ENCODE measurements at regions of chr1 and their contacts with region 1.

Region 1: DNA sequence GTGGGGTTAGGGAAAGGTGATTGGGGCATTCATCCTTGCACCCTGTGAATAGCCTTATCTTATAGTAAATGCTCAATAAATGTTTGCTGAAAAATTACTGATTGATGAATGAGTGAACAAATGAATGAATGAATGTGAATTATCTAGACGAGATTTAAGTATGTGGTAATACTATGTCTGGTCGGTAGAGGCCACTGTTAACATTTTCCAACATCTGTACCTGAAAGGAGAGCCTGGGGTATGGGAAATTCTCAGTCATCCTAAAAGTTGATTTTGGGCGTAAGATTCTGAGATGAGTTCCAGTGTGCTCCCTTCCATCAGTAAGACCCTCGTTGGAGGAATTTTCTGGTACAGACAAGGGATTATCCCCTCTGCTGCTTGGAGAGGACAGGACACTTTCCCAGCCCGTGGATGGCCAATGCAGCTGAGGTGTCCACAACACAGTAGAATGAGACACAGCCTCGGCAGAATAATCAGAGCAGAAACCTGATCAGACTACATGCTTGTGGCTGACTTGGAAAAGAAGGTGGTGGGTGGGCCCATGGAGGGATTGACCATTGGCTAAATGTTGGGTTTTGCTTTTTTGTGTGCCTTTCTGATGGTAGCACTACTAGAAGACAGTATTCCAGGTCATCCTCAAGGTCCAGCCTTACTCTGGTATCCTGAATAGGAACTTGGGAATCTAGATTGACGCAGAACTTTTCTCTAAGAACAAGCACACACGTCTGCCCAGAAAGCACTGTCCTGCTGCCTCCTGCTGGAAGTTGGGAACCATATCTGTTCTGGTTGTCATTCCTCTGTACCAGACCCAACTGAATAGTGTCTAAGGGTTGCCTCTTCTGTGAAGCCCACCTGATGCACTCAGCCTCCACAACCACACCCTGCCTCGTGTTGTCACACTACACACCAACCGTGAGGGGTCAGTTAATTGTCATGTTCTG is 262.0 kb downstream of the TNR start:
- DNase-seq: no peak
- ATAC-seq: peak in 3 of 4 donors; percentile 34 to 55 (median 36)
- H3K4me3 ChIP-seq: no peak overlapping the region
- H3K27ac ChIP-seq: no peak overlapping the region
- H3K4me1 ChIP-seq: no peaks in the 10 kb centered on the region
- H3K27me3 ChIP-seq: peaks cover 0 to 9% (median 0%) of the 10 kb centered on the region in 9 donors
- CTCF ChIP-seq: peak; percentile 37 to 72 (median 64)
- POLR2A ChIP-seq: no peak

Region 2: GRCh38 chr1:175725684-175726083 is 244.3 kb after region 1 on chr1:
- intact Hi-C with region 1: loop called in 1 of 10 experiments (anchors 10 kb)
- DNase-seq: peak in 1 of 5 donors; percentile 26
- ATAC-seq: no peak
- H3K4me3 ChIP-seq: no peak overlapping the region
- H3K27ac ChIP-seq: no peak overlapping the region
- H3K4me1 ChIP-seq: no peaks in the 10 kb centered on the region
- H3K27me3 ChIP-seq: peaks cover 0 to 15% (median 0%) of the 10 kb centered on the region in 9 donors
- CTCF ChIP-seq: no peak
- POLR2A ChIP-seq: no peak

Region 3: GRCh38 chr1:175742790-175743459 is 261.5 kb after region 1 on chr1:
- intact Hi-C with region 1: loop called in 7 of 10 experiments (anchors 5 to 10 kb)
- DNase-seq: no peak
- ATAC-seq: peak; percentile 37 to 79 (median 51)
- H3K4me3 ChIP-seq: no peak overlapping the region
- H3K27ac ChIP-seq: no peak overlapping the region
- H3K4me1 ChIP-seq: peaks cover 0 to 5% (median 0%) of the 10 kb centered on the region in 12 donors
- H3K27me3 ChIP-seq: peaks cover 0 to 22% (median 4%) of the 10 kb centered on the region in 9 donors
- CTCF ChIP-seq: no peak
- POLR2A ChIP-seq: no peak

Region 4: GRCh38 chr1:175887981-175888433 is 406.6 kb after region 1 on chr1:
- intact Hi-C with region 1: loop called (anchors 2 to 10 kb)
- DNase-seq: peak; percentile 45 to 68 (median 56)
- ATAC-seq: peak; percentile 82 to 97 (median 92)
- H3K4me3 ChIP-seq: no peak overlapping the region
- H3K27ac ChIP-seq: no peak overlapping the region
- H3K4me1 ChIP-seq: peaks cover 0 to 10% (median 0%) of the 10 kb centered on the region in 12 donors
- H3K27me3 ChIP-seq: no peaks in the 10 kb centered on the region
- CTCF ChIP-seq: peak; percentile 64 to 88 (median 78)
- POLR2A ChIP-seq: no peak

Region 5: DNA sequence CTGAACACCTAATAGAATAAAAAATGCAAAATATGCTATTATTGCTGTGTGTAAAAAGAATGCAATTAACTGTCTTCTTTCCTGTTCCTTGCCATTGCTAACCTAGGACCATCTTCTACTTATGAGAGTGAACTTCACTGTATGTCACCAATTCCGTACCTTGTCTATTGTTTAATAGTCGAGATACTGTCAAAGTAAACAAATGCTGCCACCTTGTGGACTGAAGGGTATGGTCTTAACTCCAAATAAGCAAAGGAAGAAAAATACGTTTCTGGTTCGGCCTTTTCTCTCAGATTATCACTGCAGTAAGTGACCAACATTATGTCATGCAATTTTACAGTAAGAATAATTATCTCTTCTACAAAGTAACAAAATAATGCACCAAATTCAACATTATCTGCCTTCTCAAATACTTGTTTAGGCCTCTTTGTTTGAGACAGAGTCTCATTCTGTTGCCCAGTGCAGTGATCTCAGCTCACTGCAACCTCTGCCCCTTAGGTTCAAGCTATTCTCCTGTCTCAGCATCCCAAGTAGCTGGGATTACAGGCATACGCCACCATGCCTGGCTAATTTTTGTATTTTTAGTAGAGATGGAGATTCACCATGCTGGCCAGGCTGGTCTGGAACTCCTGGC is 592.2 kb after region 1 on chr1:
- intact Hi-C with region 1: loop called in 9 of 10 experiments (anchors 2 to 10 kb)
- DNase-seq: peak in 2 of 5 donors; percentile 32 to 41
- ATAC-seq: peak in 3 of 4 donors; percentile 67 to 78 (median 71)
- H3K4me3 ChIP-seq: no peak overlapping the region
- H3K27ac ChIP-seq: no peak overlapping the region
- H3K4me1 ChIP-seq: peaks cover 0 to 7% (median 0%) of the 10 kb centered on the region in 12 donors
- H3K27me3 ChIP-seq: no peaks in the 10 kb centered on the region
- CTCF ChIP-seq: peak; percentile 59 to 85 (median 71)
- POLR2A ChIP-seq: no peak